Right cardiac atrium (tissue), 5 donors: ENCODE measurements at regions of chr3 and their contacts with region 1.

Region 1: DNA sequence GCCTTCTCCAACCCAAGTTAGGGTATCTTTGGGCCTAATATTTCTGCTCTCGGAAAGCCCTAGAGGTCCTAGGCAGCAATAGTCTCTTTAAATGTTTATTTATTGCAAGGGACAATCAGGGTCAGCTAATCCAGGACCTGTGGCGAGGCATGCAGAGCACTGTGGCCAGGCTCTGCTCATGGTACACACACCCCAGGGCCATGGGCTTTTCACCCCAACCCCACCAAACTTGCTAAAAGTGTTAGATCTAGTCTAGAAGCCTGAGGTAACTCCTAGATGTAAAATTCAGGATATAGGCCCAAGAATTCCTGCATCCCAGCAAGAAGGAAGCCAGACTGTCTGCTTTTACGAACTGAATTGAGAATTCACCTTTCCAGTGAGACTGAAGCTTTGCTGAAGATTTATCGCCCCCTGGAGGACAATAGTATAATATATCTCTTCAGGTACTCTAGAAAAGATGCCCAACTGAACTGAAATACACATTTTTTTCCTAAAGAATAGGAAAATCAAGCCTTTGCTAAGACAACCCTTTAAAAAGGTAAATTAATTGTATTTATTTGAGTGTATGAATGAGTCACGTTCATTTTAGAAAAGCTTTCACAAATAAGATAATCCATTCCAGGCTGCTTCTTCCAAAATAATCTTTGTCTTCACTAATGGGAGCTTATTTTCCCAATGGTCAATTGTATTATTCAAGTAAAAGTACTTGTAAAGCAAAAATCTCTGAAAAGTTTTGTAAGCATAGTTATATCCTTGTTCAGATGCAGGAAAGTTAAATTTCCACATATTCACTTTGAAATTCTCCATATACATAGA is 89.8 kb downstream of the LRRC3B start:
- DNase-seq: peak in 1 of 3 donors; percentile 18
- ATAC-seq: peak in 1 of 2 donors; percentile 56
- H3K4me3 ChIP-seq: no peak overlapping the region
- H3K27ac ChIP-seq: no peak overlapping the region
- H3K4me1 ChIP-seq: no peaks in the 10 kb centered on the region
- H3K27me3 ChIP-seq: no peaks in the 10 kb centered on the region

Region 2: DNA sequence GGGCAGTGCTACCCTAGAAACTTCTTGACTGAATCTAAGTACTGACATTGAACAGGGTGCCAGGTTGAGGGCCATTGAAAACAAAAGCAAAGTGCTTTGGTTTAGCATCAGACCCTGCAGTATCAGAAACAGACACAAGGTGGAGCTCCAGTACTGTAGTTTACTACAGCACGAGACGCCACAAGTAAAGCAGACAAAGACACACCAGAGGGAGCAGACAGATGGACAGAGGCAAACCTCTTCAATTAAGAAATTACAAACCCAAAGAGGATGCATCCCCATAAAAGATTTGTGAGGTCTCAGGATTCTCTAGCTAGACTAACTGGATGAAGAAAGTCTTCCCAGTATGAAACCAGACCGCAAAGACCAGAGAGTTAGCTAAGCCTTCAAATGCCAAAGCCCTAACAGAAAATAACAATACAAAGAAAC is 1064.3 kb before region 1 on chr3:
- intact Hi-C with region 1: loop called in 1 of 4 experiments (anchors 5 kb)
- DNase-seq: peak in 1 of 3 donors; percentile 36
- ATAC-seq: peak; percentile 74 to 86
- H3K4me3 ChIP-seq: no peak overlapping the region
- H3K27ac ChIP-seq: no peak overlapping the region
- H3K4me1 ChIP-seq: peaks cover 1% of the 10 kb centered on the region
- H3K27me3 ChIP-seq: no peaks in the 10 kb centered on the region

Region 3: DNA sequence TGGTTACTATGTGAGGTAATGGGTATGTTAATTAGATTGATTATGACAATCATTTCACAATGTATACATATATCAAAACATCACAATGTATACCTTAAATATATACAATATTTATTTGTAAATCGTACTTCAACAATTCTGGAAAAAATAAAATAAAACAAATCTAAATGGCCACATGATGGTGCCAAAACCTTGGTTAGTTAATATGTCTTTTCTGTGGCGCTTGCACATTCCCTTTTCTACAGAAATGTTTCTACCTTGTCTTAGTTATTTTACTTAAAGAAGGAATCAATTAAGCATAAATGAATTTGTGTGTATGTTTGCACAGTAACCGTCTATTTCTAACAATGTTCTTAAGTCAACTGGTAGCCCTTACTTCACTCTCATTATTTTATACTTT is 869.1 kb before region 1 on chr3:
- intact Hi-C with region 1: loop called in 2 of 4 experiments (anchors 5 to 10 kb)
- DNase-seq: no peak
- ATAC-seq: no peak
- H3K4me3 ChIP-seq: no peak overlapping the region
- H3K27ac ChIP-seq: no peak overlapping the region
- H3K4me1 ChIP-seq: no peaks in the 10 kb centered on the region
- H3K27me3 ChIP-seq: no peaks in the 10 kb centered on the region

Region 4: DNA sequence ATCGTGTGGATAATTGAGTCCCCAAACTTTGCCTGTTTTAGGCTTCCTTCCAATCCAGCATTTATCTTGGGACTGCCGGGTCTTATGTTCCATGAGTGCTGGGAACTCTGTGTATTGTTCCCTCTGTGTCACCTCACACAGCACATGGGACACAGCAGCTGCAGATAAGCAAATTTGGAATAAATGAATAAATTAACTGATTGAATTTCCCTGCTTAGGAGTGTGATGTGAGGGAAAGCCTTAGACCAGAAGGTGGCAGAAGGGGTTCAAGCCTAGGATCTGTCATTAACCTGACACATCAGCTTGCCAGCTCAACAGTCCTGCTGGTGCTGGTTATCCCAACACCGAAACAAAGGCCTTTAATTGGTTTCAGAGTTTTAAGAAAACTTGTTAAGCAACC is 808.2 kb before region 1 on chr3:
- intact Hi-C with region 1: loop called in 2 of 4 experiments (anchors 5 to 10 kb)
- DNase-seq: no peak
- ATAC-seq: peak; percentile 63 to 83
- H3K4me3 ChIP-seq: no peak overlapping the region
- H3K27ac ChIP-seq: no peak overlapping the region
- H3K4me1 ChIP-seq: no peaks in the 10 kb centered on the region
- H3K27me3 ChIP-seq: no peaks in the 10 kb centered on the region

Region 5: GRCh38 chr3:25910997-25911396 is 801.4 kb before region 1 on chr3:
- intact Hi-C with region 1: loop called in 2 of 4 experiments (anchors 5 to 10 kb)
- DNase-seq: peak in 1 of 3 donors; percentile 33
- ATAC-seq: no peak
- H3K4me3 ChIP-seq: no peak overlapping the region
- H3K27ac ChIP-seq: no peak overlapping the region
- H3K4me1 ChIP-seq: no peaks in the 10 kb centered on the region
- H3K27me3 ChIP-seq: no peaks in the 10 kb centered on the region

Region 6: DNA sequence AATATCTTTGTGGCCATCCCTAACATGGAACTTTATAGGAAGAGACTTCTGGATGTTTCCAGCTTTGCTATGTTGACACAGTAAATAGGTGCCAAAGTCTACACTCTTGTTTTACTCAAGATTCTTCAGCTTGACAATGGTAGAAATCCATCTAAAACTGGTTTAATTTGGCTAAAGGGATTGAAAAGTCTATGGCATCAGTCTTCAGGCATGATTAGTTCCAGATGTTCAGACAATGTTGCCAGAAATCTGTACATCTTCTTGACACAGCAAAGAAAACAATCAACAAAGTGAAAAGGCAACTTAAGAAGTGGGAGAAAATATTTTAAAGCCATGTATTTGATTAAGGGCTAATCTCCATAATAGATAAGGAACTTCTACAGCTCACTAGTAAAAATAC is 40.7 kb after region 1 on chr3:
- intact Hi-C with region 1: no loop called
- DNase-seq: no peak
- ATAC-seq: no peak
- H3K4me3 ChIP-seq: no peak overlapping the region
- H3K27ac ChIP-seq: no peak overlapping the region
- H3K4me1 ChIP-seq: no peaks in the 10 kb centered on the region
- H3K27me3 ChIP-seq: no peaks in the 10 kb centered on the region

Region 7: GRCh38 chr3:26894443-26894842 is 182.0 kb after region 1 on chr3:
- intact Hi-C with region 1: no loop called
- DNase-seq: no peak
- ATAC-seq: no peak
- H3K4me3 ChIP-seq: no peak overlapping the region
- H3K27ac ChIP-seq: no peak overlapping the region
- H3K4me1 ChIP-seq: no peaks in the 10 kb centered on the region
- H3K27me3 ChIP-seq: no peaks in the 10 kb centered on the region